Endothelial cell of umbilical vein (primary cell): ENCODE measurements at regions of chr5 and their contacts with region 1.

Region 1: GRCh38 chr5:128825826-128826225 is 139.5 kb upstream of the SLC27A6 start:
- DNase-seq: peak; percentile 83
- H3K4me3 ChIP-seq: no peak overlapping the region
- H3K27ac ChIP-seq: peak overlapping the region; percentile 35
- H3K4me1 ChIP-seq: peaks cover 26% of the 10 kb centered on the region
- H3K27me3 ChIP-seq: no peaks in the 10 kb centered on the region
- CTCF ChIP-seq: no peak
- POLR2A ChIP-seq: no peak

Region 2: GRCh38 chr5:128413356-128413755 is 412.5 kb before region 1 on chr5:
- CTCF ChIA-PET with region 1: no interaction called
- POLR2A ChIA-PET with region 1: no interaction called
- dilution Hi-C with region 1: no loop called
- intact Hi-C with region 1: loop called (anchors 10 kb)
- DNase-seq: peak; percentile 23
- H3K4me3 ChIP-seq: no peak overlapping the region
- H3K27ac ChIP-seq: no peak overlapping the region
- H3K4me1 ChIP-seq: peaks cover 26% of the 10 kb centered on the region
- H3K27me3 ChIP-seq: peaks cover 0 to 1% of the 10 kb centered on the region in 2 experiments
- CTCF ChIP-seq: no peak
- POLR2A ChIP-seq: no peak

Region 3: GRCh38 chr5:128773378-128773777 is 52.4 kb before region 1 on chr5:
- CTCF ChIA-PET with region 1: no interaction called
- POLR2A ChIA-PET with region 1: no interaction called
- dilution Hi-C with region 1: no loop called
- intact Hi-C with region 1: loop called (anchors 1 kb)
- DNase-seq: peak; percentile 91
- H3K4me3 ChIP-seq: no peak overlapping the region
- H3K27ac ChIP-seq: no peak overlapping the region
- H3K4me1 ChIP-seq: peaks cover 20% of the 10 kb centered on the region
- H3K27me3 ChIP-seq: no peaks in the 10 kb centered on the region
- CTCF ChIP-seq: no peak
- POLR2A ChIP-seq: no peak

Region 4: GRCh38 chr5:129003226-129003625 is 177.4 kb after region 1 on chr5:
- CTCF ChIA-PET with region 1: no interaction called
- POLR2A ChIA-PET with region 1: no interaction called
- dilution Hi-C with region 1: no loop called
- intact Hi-C with region 1: no loop called
- DNase-seq: no peak
- H3K4me3 ChIP-seq: no peak overlapping the region
- H3K27ac ChIP-seq: no peak overlapping the region
- H3K4me1 ChIP-seq: no peaks in the 10 kb centered on the region
- H3K27me3 ChIP-seq: no peaks in the 10 kb centered on the region
- CTCF ChIP-seq: no peak
- POLR2A ChIP-seq: no peak